ENCODE measurements at regions of chr7 and their contacts with region 1.

Region 1: GRCh38 chr7:39732837-39733804 is 109.7 kb downstream of the RALA start:
- DNase-seq: peak; percentile 98
- ATAC-seq: peak; percentile 94
- H3K4me3 ChIP-seq: peak overlapping the region; percentile 55 to 77
- H3K27ac ChIP-seq: peak overlapping the region in 1 of 2 donors; percentile 10
- H3K4me1 ChIP-seq: no peaks in the 10 kb centered on the region
- H3K27me3 ChIP-seq: no peaks in the 10 kb centered on the region

Region 2: DNA sequence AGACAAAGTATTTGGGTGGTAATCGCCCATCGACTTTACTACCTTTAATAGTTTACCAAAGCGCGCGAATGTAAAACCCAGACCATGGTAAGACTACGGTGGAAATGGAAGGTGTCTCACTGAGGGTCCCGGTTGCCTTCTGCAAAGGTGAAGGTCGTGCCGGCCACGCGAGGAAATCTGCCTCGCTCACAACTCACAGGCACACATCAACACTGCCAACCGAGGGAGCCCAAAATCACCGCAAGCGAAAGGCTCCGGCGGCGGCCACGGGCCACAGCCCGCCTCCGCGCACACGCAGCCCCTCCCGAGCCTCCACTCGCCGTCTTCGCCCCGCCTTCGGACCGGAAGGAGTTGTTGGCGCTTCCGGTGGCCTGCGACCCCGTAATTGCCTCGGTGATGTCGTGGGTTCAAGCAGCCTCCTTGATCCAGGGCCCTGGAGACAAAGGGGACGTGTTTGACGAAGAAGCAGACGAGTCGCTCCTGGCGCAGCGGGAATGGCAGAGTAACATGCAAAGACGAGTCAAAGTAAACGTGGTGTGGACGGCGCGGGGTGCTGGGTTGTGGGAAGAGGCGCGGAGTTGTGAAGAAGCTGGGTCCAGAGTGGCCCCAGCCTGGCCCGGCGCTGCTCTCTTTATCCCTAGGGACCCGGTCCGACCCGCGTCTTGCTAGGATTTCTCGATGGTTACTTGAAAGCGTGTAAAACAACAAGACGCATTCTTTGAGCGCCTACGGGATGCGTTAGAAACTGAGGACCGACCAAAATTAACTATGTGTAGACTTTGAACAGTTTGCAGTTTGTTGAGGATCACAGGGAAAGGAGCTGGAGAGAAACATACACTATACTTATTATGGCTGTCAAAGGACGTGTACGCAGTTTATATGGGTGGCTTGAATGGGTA is 166.8 kb before region 1 on chr7 and contains the start of gene YAE1:
- intact Hi-C with region 1: loop called in 1 of 2 experiments (anchors 5 kb)
- DNase-seq: peak; percentile 88 to 95
- ATAC-seq: peak; percentile 96
- H3K4me3 ChIP-seq: peak within 1 kb of the TSS; percentile 67 to 73
- H3K27ac ChIP-seq: peak within 1 kb of the TSS in 1 of 2 donors; percentile 82
- H3K4me1 ChIP-seq: peaks cover 0 to 3% of the 10 kb centered on the region in 2 donors
- H3K27me3 ChIP-seq: no peaks in the 10 kb centered on the region
- total RNA-seq, gene YAE1: 14.6 to 20.8 TPM